Right cardiac atrium (tissue), 5 donors: ENCODE measurements at regions of chr3 and their contacts with region 1.

Region 1: DNA sequence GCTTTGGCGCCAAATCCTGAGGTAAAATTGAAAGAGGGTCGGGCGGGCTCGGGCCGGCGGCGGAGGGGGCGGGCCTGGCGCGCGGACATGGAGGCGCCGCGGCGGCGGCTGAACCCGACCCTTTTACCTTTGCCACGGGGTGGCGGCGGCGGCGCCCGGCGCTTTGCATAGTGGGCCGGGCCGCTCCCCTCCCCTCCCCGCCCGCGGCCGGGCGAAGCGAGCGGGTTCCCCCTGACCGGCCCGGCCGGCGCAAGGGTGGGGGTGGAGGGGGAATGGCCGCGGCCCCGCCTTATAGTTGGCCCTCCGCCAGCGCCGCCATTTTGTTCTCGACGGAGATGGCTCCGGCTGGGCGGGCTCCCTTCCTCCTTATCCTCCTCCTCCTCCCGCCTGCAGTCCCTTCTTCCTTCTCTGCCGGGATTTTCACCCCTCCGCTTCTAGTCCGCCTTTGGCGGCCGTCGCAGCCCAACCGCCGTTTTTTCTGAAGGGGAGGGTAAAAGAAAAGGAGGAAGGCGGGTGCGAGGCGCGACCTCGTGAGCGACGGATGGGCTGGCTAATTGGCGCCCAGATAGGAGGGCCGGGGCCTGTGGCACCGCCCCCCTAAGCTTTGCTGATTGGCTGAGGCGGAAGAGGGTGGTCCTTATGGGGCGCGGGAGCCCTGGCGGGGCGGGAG is 638 bp downstream of the NR2C2 start:
- DNase-seq: peak; percentile 97 to 99 (median 98)
- ATAC-seq: peak; percentile 98
- H3K4me3 ChIP-seq: peak overlapping the region; percentile 97
- H3K27ac ChIP-seq: peak overlapping the region; percentile 99
- H3K4me1 ChIP-seq: peaks cover 4% of the 10 kb centered on the region
- H3K27me3 ChIP-seq: no peaks in the 10 kb centered on the region

Region 2: DNA sequence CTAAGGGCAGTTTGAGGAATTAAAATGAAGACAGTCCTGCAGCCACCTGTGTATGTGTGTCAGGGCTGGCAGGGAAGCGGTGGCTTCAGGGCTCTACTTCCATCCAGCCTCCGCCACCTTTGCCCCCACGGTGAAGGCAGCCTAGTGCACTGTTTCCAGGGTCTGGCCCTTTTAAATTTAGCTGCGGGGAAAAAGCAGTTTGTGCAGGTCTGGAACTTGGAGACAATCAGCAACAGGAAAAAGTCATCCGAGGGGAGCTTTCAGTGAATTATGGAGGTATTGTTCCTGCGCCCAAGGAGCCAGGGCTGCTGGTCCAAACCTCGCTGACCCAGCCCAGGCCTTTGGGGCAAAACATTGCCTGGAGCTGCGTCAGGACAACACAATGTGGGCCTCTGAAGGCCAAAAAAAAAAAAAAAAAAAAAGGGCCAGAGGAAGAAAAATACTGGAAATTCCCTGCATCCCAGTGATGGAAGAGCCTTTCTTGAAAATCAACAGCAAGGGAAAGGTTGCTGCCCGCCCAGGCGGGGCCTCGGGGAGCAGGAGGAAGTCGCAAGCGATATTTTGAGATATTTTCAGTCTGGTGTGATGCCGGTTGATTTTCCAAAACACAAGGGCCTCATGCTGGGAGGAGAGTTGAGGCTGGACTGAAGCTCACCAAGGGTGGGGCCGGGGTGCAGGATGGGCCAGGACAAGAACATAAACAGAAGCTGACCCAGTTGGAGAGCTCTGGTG is 154.7 kb before region 1 on chr3:
- intact Hi-C with region 1: no loop called
- DNase-seq: peak; percentile 68 to 85 (median 85)
- ATAC-seq: peak; percentile 82 to 91
- H3K4me3 ChIP-seq: no peak overlapping the region
- H3K27ac ChIP-seq: peak overlapping the region; percentile 33
- H3K4me1 ChIP-seq: peaks cover 8% of the 10 kb centered on the region
- H3K27me3 ChIP-seq: no peaks in the 10 kb centered on the region

Region 3: GRCh38 chr3:14863333-14864100 is 84.5 kb before region 1 on chr3:
- intact Hi-C with region 1: no loop called
- DNase-seq: peak in 1 of 3 donors; percentile 59
- ATAC-seq: peak in 1 of 2 donors; percentile 17
- H3K4me3 ChIP-seq: no peak overlapping the region
- H3K27ac ChIP-seq: no peak overlapping the region
- H3K4me1 ChIP-seq: peaks cover 18% of the 10 kb centered on the region
- H3K27me3 ChIP-seq: no peaks in the 10 kb centered on the region

Region 4: DNA sequence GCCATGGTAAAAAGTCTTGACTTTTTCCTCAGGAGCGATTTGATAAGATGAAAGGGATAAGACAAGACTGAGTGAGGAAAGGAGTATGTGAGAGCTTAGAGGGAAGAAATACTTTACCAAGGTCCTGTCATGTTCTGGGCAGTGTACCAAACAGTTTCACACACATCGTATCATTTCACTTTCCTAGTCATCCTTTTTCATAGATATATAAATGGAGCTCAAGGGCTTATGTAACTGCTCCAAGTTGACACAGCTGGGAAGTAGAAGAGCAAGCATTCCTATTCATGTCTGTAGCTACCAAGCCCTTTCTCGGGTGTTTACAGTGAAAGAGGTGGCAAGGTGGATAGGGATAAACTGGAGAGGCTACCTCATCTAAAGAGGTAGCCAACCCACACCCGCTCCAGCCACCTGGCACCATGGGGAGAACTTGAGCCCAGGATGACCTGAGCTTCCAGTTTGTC is 59.7 kb after region 1 on chr3:
- intact Hi-C with region 1: no loop called
- DNase-seq: no peak
- ATAC-seq: peak; percentile 73 to 80
- H3K4me3 ChIP-seq: no peak overlapping the region
- H3K27ac ChIP-seq: no peak overlapping the region
- H3K4me1 ChIP-seq: no peaks in the 10 kb centered on the region
- H3K27me3 ChIP-seq: no peaks in the 10 kb centered on the region

Region 5: GRCh38 chr3:15042936-15043335 is 94.9 kb after region 1 on chr3:
- intact Hi-C with region 1: loop called in 1 of 4 experiments (anchors 10 kb)
- DNase-seq: no peak
- ATAC-seq: no peak
- H3K4me3 ChIP-seq: no peak overlapping the region
- H3K27ac ChIP-seq: no peak overlapping the region
- H3K4me1 ChIP-seq: peaks cover 4% of the 10 kb centered on the region
- H3K27me3 ChIP-seq: no peaks in the 10 kb centered on the region